ENCODE measurements at regions of chr13 and their contacts with region 1.

Region 1: GRCh38 chr13:79480954-79481684 is at the start of gene NDFIP2:
- DNase-seq: peak; percentile 91
- total RNA-seq, gene NDFIP2: 26.9 TPM

Region 2: GRCh38 chr13:79385694-79386093 is 95.4 kb before region 1 on chr13:
- intact Hi-C with region 1: no loop called
- DNase-seq: no peak

Region 3: DNA sequence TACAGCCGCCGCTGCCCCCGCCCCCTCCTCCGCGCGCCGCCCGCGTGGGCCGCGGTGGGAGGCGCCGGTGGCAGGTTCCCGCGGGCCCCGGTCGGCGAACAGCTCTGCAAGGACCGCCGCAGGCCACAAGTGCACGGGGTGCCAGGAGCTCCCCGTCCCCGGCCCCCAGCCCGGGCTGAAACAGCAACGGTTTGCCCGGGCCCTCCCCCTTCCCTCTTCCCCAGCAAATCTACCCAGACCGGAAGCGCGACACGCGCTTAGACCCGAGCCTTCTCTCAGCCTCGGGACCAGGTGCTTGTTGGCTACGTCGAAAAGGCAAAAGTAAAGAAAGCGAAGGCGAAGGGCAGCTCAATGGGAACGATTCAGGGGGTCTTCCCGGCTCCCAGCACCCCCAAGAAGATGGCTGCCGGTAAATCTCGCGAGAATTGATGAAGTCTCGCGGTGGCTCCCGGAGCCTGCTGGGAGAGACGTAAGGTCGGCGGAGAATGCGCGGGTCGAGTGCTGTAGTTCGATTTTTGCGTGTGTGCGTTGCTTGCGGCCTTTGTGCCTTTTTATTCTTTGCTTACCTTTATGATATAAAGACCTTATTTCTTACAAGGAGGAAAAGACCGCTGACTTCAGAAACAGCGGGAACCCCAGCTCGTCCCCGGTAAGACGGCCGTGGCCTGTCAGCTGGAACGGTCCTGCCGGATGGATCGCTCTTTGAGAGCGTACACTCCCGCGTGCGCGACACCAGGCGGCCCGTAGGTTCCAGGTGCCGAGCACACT is 75.1 kb before region 1 on chr13 and contains the start of gene RBM26:
- intact Hi-C with region 1: loop called (anchors 5 kb)
- DNase-seq: peak; percentile 96
- total RNA-seq, gene RBM26: 28.8 TPM